ENCODE measurements at regions of chr3 and their contacts with region 1.

Region 1: DNA sequence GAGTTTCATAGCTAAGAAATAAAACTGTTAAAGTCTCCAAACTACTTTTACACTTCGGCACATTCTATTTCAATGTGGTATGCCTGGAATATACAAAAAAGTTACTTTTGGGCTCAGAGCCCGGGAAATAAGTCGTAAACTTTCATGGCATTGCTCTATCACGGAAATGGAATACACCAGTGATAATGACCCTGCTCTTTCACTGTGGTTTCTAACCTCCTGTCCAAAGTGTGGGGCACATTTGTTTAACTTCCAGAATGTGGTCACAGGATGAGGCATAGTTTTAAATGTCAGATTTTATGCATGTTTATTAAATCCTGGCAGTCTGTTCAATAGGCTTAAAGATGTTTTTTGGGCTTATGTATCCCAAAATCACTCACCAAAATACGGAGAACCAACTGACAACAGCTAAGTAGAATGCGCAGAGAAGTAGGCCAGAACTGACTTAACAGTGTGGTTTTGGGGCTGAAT is 5.1 kb downstream of the CXCR6 start:
- DNase-seq: no peak
- ATAC-seq: no peak
- H3K4me3 Mint-ChIP-seq: peak overlapping the region; percentile 16
- H3K27ac Mint-ChIP-seq: peak overlapping the region; percentile 94
- H3K4me1 Mint-ChIP-seq: peaks cover 90% of the 10 kb centered on the region
- H3K27me3 Mint-ChIP-seq: no peaks in the 10 kb centered on the region

Region 2: DNA sequence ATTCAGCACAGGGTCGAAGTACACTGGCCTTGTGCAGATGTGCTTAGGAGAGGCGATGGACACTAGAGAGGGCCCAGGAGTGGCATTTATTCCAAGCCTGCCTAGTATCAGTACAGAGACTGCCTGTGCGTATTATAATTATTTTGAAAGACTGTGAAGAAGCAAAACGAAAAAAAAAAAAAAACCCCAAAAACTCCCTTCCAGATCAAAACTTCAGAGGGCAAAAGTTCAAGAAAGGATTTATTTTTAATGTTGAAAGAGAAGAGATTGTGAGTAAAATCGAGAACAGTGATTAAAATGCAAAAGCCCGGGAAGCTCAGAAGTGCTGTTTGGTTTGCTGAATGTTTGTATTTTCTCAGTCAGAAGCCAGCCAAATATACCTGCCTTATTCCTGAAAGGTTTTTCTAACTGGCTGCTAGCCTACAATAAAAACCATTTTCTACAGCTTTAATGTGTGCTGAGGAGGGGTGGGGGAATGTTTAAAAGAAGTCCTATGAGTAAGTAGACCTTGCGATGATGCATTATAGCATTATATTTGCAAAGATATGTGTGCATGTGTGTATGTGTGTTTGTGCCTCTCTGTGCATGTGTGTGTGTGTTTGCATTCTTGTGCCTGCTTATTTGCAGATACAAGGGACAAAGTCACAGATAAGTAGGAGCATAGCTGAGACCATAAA is 87.2 kb before region 1 on chr3:
- POLR2A ChIA-PET with region 1: no interaction called
- DNase-seq: no peak
- ATAC-seq: no peak
- H3K4me3 Mint-ChIP-seq: no peak overlapping the region
- H3K27ac Mint-ChIP-seq: no peak overlapping the region
- H3K4me1 Mint-ChIP-seq: peaks cover 12% of the 10 kb centered on the region
- H3K27me3 Mint-ChIP-seq: peaks cover 48% of the 10 kb centered on the region

Region 3: DNA sequence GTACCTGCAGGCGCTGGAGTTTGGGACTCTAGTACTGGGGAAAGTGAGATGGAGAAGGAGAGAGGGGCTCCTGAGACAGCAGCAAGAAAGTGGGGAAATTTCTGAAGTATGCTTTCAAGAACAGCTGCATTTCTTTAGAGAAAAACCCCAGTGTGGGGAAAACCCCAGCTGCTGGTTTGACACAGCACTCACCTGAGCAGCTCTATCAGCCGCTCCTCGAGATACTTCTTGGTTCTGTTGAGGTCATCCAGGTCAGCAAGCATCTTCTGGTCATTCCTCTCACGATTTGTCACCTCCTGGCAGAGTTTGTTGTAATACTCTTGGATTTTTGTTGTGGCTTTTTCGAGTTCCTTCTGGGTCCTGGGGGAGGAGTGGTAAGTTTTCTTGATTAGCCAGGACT is 13.7 kb after region 1 on chr3:
- POLR2A ChIA-PET with region 1: interaction called, 44 read pairs
- DNase-seq: no peak
- ATAC-seq: no peak
- H3K4me3 Mint-ChIP-seq: peak overlapping the region; percentile 35
- H3K27ac Mint-ChIP-seq: peak overlapping the region; percentile 59
- H3K4me1 Mint-ChIP-seq: peaks cover 70% of the 10 kb centered on the region
- H3K27me3 Mint-ChIP-seq: no peaks in the 10 kb centered on the region

Region 4: DNA sequence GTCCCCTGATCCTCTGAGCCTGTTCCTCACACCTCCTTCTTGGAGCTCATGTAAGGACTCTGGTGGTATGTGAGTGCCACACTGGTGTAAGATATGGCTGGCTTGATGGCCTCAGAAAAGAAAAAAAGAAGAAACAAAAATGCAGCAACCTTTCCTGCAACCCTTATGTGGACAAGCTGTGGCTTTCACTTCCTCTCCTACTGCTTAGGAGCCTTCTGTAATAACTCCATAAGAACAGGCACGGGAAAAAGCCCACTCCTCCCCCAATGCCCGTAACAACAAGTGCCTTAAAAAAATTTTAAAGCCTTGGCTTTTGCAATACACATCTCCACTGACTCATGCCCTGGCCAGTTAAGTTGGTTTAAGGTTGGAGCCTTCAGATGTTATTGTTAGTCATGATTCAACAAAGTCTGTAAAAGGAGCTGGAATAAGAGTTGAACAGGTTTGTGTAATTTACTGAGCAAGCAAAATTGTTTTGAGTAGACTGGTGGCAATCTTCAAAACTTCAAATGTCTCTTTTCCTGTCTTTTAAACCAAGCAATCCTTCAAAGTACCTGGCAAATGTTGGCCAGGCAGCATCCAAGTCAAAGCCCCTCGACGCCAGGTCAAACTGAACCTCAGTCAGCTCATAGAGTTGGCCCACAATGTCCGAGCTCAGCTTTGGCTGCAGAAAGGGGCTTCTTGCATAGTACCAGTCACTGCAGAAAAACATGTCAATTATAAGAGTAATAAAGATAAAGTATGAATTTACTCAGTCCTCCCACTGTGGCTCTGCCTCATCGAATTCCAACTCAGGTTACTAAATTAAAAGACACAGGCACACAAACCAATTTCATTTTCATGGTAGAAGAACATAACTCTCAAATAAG is 24.4 kb after region 1 on chr3:
- POLR2A ChIA-PET with region 1: interaction called, 44 read pairs
- DNase-seq: no peak
- ATAC-seq: peak; percentile 41
- H3K4me3 Mint-ChIP-seq: peak overlapping the region; percentile 55
- H3K27ac Mint-ChIP-seq: peak overlapping the region; percentile 83
- H3K4me1 Mint-ChIP-seq: peaks cover 71% of the 10 kb centered on the region
- H3K27me3 Mint-ChIP-seq: no peaks in the 10 kb centered on the region

Region 5: DNA sequence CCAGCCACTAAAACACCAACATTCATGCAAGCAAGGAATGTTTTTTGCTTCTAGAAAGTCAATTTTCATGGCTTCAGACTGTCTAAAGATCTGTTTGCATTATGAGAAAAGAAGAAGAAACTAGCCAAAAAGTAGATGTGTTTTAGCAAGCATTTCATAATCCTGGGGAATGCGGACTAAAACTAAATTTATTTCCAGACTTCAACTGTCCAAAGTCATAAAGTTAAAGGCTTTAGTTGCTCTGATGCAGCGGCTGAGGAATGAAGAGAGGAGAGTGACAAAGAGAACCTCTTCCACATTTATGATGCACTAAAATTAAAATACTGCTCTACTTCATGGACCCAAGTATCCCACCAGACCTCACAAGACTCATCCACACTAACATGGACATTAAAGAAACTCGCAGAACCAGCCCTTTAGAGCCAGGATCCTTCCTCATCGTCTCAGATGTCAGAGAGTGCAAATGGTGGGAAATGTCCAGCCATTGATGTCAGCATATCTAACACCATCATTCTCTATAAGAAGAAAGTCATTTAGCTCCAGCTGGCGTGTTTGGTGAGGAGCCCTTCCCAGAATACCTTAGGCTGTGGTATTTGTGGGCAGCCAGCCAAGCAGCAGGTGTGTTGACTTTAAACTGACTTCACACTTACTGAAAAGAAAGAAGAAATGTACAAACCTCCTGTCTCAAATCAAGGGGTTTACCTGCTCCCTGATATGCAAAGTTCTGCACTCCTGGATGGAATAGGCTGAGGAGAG is 29.8 kb after region 1 on chr3:
- POLR2A ChIA-PET with region 1: interaction called, 16 read pairs
- DNase-seq: peak; percentile 64
- ATAC-seq: peak; percentile 55
- H3K4me3 Mint-ChIP-seq: peak overlapping the region; percentile 87
- H3K27ac Mint-ChIP-seq: peak overlapping the region; percentile 98
- H3K4me1 Mint-ChIP-seq: peaks cover 78% of the 10 kb centered on the region
- H3K27me3 Mint-ChIP-seq: no peaks in the 10 kb centered on the region

Region 6: DNA sequence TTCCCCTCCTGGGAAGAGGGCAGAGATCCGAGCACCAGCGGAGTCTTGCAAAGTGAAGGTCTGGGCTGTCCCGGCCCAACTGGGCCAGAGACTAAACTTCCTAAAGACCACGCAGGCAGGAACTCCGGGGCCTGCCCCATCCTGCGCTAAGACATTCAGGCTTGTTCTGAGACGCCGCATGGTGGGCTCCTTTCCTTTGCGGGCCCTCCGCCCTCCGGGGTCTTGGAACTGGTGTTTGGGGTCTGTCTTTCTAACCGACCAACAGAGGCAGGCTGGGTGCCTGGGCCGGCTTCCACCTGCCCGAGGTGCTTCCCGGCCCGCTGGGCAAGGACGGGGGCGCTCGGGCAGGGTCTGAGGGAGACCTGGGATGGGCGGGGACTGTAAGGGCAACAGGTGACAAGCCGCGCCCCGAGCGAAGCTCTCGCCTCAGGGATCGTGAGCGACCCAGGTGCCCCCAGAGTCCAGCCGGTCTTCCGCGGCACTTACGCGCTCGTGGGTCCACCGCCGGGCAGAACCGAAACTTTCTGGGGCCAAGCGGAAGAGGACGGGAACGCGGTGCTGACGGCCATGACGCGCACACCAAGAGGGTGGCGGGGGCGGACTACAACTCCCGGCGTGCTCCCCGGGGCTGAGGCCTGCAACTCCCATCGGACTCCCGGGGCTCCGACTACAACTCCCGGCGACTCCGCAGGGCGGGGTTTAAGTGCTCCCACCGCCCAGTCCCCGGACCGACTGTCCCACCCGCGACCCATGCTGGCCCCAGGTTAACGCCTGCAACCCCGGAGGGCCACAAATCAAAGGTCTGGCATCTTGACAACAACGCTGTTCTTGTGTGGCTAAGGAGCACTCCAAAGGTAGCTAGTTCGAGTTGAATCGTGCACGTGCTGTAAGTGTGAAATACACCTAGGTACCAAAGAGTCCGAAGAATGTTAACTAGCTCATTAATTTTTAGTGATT is 47.2 kb after region 1 on chr3 and contains the start of gene FYCO1:
- POLR2A ChIA-PET with region 1: interaction called, 34 read pairs
- DNase-seq: peak; percentile 89
- ATAC-seq: peak; percentile 83
- H3K4me3 Mint-ChIP-seq: peak within 1 kb of the TSS; percentile 93
- H3K27ac Mint-ChIP-seq: peak within 1 kb of the TSS; percentile 90
- H3K4me1 Mint-ChIP-seq: peaks cover 43% of the 10 kb centered on the region
- H3K27me3 Mint-ChIP-seq: peaks cover 16% of the 10 kb centered on the region
- total RNA-seq, gene FYCO1: 37.9 to 39.1 TPM

Region 7: DNA sequence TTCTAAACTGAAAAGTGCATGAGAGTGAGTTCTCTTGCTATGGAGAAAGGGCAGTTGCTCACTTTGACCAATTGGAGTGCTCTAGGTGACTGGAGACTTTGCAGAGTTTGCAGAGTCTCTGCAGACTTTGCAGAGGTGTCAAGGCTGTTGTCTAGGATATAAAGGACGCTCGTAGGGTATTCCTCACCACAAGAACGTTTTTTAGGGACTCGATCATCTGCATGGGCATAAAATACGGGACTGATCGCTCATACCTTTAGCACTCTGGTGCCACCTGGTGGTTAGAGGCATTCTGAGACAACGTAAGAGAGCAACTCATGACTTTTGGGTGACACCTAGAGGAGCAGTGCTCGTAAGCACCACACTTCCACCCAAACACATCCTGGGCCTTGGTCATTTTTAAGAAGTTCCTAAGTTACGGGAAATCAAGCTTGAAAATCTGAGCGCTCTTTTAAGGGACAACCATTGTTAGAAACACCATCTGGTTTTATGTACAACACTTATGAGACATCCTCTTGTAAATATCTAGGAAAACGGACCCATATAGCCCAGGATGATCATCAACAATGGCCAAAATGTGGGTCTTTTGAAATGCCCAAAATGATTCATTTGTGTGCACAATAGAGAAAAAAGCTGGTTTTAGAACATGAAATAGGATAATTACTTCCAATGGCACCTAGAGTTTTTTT is 130.5 kb after region 1 on chr3:
- POLR2A ChIA-PET with region 1: interaction called, 12 read pairs
- DNase-seq: peak; percentile 73
- ATAC-seq: peak; percentile 96
- H3K4me3 Mint-ChIP-seq: peak overlapping the region; percentile 44
- H3K27ac Mint-ChIP-seq: peak overlapping the region; percentile 51
- H3K4me1 Mint-ChIP-seq: peaks cover 39% of the 10 kb centered on the region
- H3K27me3 Mint-ChIP-seq: peaks cover 3% of the 10 kb centered on the region